Mammary epithelial cell (primary cell): ENCODE measurements at regions of chr18 and their contacts with region 1.

Region 1: GRCh38 chr18:14935210-14935609 is 187.2 kb downstream of the ANKRD30B start:
- DNase-seq: no peak
- H3K4me3 ChIP-seq: no peak overlapping the region
- H3K27ac ChIP-seq: no peak overlapping the region
- H3K4me1 ChIP-seq: no peaks in the 10 kb centered on the region
- H3K27me3 ChIP-seq: no peaks in the 10 kb centered on the region
- CTCF ChIP-seq: no peak

Region 2: GRCh38 chr18:14971461-14972185 is 36.4 kb after region 1 on chr18:
- CTCF ChIA-PET with region 1: no interaction called
- dilution Hi-C with region 1: no loop called
- in situ Hi-C with region 1: no loop called
- intact Hi-C with region 1: loop called (anchors 5 kb)
- DNase-seq: peak; percentile 56
- H3K4me3 ChIP-seq: no peak overlapping the region
- H3K27ac ChIP-seq: no peak overlapping the region
- H3K4me1 ChIP-seq: peaks cover 16% of the 10 kb centered on the region
- H3K27me3 ChIP-seq: no peaks in the 10 kb centered on the region
- CTCF ChIP-seq: no peak